Left ventricle myocardium inferior (tissue), 1 donor: ENCODE measurements at regions of chr20 and their contacts with region 1.

Region 1: GRCh38 chr20:20360464-20360863 is 7.4 kb upstream of the INSM1 start:
- DNase-seq: no peak
- H3K4me3 ChIP-seq: no peak overlapping the region
- H3K27ac ChIP-seq: no peak overlapping the region
- H3K4me1 ChIP-seq: peaks cover 28% of the 10 kb centered on the region
- H3K27me3 ChIP-seq: peaks cover 58% of the 10 kb centered on the region
- CTCF ChIP-seq: peak; percentile 83

Region 2: GRCh38 chr20:20083807-20084206 is 276.7 kb before region 1 on chr20:
- intact Hi-C with region 1: no loop called
- DNase-seq: no peak
- H3K4me3 ChIP-seq: no peak overlapping the region
- H3K27ac ChIP-seq: peak overlapping the region; percentile 93
- H3K4me1 ChIP-seq: peaks cover 9% of the 10 kb centered on the region
- H3K27me3 ChIP-seq: peaks cover 7% of the 10 kb centered on the region
- CTCF ChIP-seq: peak; percentile 59

Region 3: DNA sequence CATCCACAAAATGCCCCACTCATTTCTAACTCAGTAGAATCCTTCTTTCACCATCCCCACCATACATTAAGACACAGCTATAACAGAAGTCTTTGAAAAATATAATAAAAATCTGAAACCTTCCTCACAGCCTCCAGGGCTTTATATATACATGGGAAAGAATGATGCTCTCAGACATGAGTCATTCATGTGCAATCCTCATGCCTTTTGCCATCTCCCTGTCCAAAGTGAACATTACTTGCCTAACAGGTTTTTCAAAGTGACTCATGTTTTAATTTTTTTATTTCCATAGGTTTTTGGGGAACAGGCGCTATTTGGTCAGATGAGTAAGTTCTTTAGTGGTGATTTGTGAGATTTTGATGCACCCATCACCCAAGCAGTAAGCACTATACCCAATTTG is 189.3 kb after region 1 on chr20:
- intact Hi-C with region 1: no loop called
- DNase-seq: no peak
- H3K4me3 ChIP-seq: no peak overlapping the region
- H3K27ac ChIP-seq: no peak overlapping the region
- H3K4me1 ChIP-seq: no peaks in the 10 kb centered on the region
- H3K27me3 ChIP-seq: no peaks in the 10 kb centered on the region
- CTCF ChIP-seq: no peak

Region 4: DNA sequence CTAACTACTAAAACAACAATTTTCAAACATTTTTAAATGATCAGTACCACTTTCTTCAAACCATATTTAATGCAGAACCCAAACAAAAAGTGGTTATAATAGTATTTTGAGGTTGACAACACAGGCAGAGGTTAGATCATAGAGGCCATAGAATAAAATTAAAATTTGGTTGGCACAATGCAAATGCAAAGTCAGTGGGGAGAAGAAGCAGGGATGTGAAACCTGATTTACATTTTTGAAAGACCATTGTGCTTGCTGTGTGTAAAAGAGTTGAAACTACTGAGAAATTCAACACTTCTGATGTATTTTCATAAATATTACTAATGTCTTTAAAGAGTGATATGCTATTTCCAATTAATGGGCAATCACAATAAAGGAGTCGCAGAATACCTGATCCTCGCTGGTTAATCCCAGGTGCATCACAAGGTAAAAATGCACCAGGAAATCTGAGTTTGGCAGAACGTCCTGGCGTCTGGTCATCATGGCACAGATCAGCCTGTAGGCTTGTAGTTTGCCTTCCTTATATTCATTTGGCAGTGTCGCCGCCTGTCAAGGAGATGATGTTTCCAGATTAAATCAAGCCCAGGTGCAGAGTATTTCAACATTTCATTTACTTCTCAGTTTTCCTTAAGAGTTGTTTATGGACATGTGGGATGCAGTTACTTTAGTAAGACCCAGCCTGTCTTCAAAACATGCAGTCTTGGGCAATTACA is 210.8 kb after region 1 on chr20:
- intact Hi-C with region 1: loop called (anchors 10 kb)
- DNase-seq: no peak
- H3K4me3 ChIP-seq: no peak overlapping the region
- H3K27ac ChIP-seq: no peak overlapping the region
- H3K4me1 ChIP-seq: no peaks in the 10 kb centered on the region
- H3K27me3 ChIP-seq: no peaks in the 10 kb centered on the region
- CTCF ChIP-seq: no peak